ENCODE measurements at regions of chr20 and their contacts with region 1.

Region 1: DNA sequence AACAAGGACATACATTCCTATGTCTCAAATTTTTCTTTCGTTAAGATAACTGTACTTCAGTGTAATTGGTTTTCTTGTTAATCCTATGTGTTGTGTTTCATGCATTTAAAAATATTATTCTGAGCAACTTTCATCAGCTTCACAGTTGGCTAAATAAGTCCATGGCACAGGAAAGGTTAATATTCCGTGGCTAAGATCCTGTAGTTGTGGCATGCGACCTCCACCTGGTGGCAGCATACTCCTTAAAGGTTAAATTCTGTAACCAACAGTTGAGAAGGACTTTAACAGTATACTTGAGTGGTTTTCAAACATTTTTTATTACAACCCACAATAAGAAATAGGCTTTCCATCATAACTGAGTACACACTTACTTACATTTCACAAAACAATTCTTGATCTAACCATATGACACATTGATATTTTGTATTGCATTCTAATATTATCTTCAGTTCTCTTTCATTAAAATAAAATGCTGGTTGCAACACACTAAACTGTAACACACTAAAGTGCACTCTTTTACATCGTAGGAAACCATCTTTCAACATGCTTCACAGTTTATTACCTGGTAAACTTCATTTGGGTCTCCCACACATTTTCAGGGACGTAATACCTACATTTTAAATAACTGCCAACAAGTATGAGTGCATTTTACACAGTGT is 118.3 kb downstream of the SLX4IP start:
- DNase-seq: peak in 1 of 2 donors; percentile 89
- H3K4me3 ChIP-seq: no peak overlapping the region
- H3K27ac ChIP-seq: no peak overlapping the region
- H3K4me1 ChIP-seq: peaks cover 3 to 47% of the 10 kb centered on the region in 2 donors
- H3K27me3 ChIP-seq: no peaks in the 10 kb centered on the region
- CTCF ChIP-seq: peak; percentile 69 to 83 (median 72)

Region 2: DNA sequence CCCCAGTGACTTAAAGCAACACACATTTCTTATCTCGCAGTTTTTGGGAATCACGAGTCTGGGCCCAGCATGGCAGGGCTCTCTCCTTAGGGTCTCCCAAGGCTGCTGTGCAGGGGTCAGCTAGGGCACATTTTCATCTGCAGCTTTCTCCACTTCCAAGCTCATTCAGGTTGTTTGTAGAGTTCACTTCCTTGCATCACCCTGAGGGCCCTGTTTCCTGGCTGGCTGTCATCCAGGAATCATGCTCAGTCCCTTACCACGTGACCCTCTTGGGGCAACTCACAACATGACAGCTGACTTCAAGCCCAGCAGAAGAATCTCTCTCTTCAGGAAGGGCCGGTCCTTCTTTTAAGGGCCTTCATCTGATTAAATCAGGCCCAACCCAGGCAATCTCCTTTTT is 313.5 kb before region 1 on chr20:
- intact Hi-C with region 1: no loop called
- DNase-seq: no peak
- H3K4me3 ChIP-seq: no peak overlapping the region
- H3K27ac ChIP-seq: no peak overlapping the region
- H3K4me1 ChIP-seq: no peaks in the 10 kb centered on the region
- H3K27me3 ChIP-seq: no peaks in the 10 kb centered on the region
- CTCF ChIP-seq: no peak

Region 3: GRCh38 chr20:10476319-10476724 is 77.1 kb before region 1 on chr20:
- intact Hi-C with region 1: loop called (anchors 2 kb)
- DNase-seq: no peak
- H3K4me3 ChIP-seq: no peak overlapping the region
- H3K27ac ChIP-seq: no peak overlapping the region
- H3K4me1 ChIP-seq: peaks cover 0 to 17% of the 10 kb centered on the region in 2 donors
- H3K27me3 ChIP-seq: no peaks in the 10 kb centered on the region
- CTCF ChIP-seq: no peak

Region 4: DNA sequence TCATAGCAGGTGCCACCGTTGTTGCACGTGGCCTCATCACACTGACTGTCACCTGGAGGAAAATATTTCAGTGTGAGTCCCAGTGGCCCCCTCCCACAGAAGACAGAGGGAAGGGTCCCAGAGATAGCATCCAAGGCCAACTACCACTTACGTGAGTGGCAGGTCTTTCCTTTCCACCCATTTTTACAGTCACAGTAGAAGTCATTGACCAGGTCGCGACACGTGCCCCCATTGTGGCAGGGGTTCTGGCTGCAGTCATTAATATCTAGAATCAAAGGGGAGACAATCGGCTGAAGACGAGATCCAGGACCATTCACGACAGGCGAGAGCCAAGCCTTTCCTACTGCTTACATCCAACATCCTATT is 91.7 kb after region 1 on chr20:
- intact Hi-C with region 1: no loop called
- DNase-seq: peak in 1 of 2 donors; percentile 50
- H3K4me3 ChIP-seq: no peak overlapping the region
- H3K27ac ChIP-seq: peak overlapping the region; percentile 93 to 100
- H3K4me1 ChIP-seq: peaks cover 6 to 53% of the 10 kb centered on the region in 2 donors
- H3K27me3 ChIP-seq: no peaks in the 10 kb centered on the region
- CTCF ChIP-seq: no peak

Region 5: DNA sequence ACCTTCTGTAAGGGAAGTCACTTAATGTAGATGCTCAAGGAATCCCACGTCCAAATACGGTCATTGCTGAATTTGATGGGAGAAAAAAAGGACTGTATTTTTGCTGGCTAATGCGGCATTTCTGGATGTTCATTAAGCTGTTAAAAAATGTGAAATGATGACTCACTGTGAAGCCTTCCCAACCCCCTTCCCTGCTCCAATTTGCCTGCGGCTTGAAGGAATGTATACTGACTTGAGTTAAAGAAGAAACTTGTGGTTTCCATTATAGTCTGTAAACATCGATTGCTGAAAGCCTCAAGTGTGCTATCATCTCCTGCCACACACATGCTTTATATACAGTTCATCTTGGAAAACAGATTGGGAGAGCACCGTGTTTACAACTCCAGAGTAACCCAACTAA is 369.5 kb after region 1 on chr20:
- intact Hi-C with region 1: loop called (anchors 10 kb)
- DNase-seq: no peak
- H3K4me3 ChIP-seq: no peak overlapping the region
- H3K27ac ChIP-seq: peak overlapping the region in 1 of 2 donors; percentile 31
- H3K4me1 ChIP-seq: peaks cover 0 to 16% of the 10 kb centered on the region in 2 donors
- H3K27me3 ChIP-seq: no peaks in the 10 kb centered on the region
- CTCF ChIP-seq: no peak

Region 6: DNA sequence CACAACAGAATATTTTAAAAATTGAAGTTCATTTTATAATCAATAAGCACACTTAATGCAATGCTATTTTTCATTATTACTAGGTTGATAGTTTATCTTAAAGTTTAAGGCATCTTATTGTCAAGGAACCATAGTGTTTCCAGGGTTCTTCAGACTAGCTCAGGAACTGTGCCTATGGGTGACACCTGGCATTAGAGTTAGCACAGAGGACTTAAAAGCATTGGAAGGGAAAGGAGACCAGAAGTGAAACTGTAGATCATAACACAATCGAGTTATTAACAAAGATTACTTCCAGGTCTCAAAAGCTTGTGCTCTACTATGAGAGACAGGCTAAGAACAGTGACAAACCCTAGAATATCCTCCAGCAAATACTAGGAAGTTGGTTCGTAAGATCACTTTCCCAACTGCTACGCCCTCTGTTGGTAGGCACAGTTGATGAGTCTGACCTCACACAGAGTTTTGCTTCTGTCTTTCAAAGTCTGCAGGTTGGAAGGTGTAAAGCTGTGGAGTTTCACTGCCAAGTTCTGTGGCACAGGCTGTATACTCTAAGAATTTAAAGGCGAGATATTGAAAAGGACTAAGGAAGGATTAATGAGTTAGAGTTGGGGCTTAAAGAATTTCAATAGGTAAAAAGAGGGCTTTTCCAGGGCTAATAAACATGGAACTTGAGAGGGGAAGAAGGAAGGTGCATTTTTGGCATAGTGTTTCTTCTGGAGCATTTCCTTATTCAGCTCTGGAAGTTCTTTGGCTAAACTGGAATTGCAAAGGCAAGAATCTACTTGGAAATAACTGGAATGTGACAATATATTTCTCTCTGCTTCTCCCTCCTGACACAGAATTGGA is 651.7 kb after region 1 on chr20:
- intact Hi-C with region 1: loop called (anchors 2 kb)
- DNase-seq: peak in 1 of 2 donors; percentile 68
- H3K4me3 ChIP-seq: no peak overlapping the region
- H3K27ac ChIP-seq: peak overlapping the region; percentile 3 to 38
- H3K4me1 ChIP-seq: peaks cover 0 to 10% of the 10 kb centered on the region in 2 donors
- H3K27me3 ChIP-seq: no peaks in the 10 kb centered on the region
- CTCF ChIP-seq: peak; percentile 59 to 72 (median 59)

Region 7: GRCh38 chr20:11544029-11544678 is 990.7 kb after region 1 on chr20:
- intact Hi-C with region 1: loop called (anchors 5 kb)
- DNase-seq: peak in 1 of 2 donors; percentile 62
- H3K4me3 ChIP-seq: peak overlapping the region; percentile 31 to 39
- H3K27ac ChIP-seq: no peak overlapping the region
- H3K4me1 ChIP-seq: peaks cover 0 to 2% of the 10 kb centered on the region in 2 donors
- H3K27me3 ChIP-seq: no peaks in the 10 kb centered on the region
- CTCF ChIP-seq: peak; percentile 43 to 64 (median 52)

Measured in ascending aorta (tissue), 2 donors.